Heart left ventricle (tissue), 16 donors: ENCODE measurements at regions of chr2 and their contacts with region 1.

Region 1: DNA sequence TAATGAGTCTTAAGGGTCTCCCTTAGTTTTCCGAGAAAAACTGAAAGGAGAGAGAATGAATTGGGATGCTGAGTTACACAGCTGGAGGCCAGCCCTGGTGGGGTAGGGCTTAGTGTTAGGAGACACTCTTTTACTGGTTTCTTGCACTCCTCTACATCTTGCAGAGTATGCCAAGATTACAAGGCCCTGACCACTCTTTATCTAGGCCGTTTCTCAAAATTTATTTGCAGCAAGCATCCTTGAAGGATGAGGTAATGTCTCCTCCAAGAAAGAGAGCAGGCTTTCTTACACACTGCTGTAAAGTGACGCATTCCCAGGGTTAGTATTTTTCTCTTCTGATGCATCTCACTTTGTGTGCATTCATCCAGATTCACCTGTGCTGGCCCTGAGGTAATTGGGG is 166.2 kb downstream of the TDRD15 start:
- DNase-seq: peak in 2 of 5 donors; percentile 42 to 54
- ATAC-seq: peak in 3 of 4 donors; percentile 75 to 91 (median 81)
- H3K4me3 ChIP-seq: no peak overlapping the region
- H3K27ac ChIP-seq: peak overlapping the region in 7 of 12 donors; percentile 4 to 80 (median 29)
- H3K4me1 ChIP-seq: peaks cover 0 to 25% (median 7%) of the 10 kb centered on the region in 12 donors
- H3K27me3 ChIP-seq: no peaks in the 10 kb centered on the region
- CTCF ChIP-seq: no peak
- POLR2A ChIP-seq: no peak

Region 2: DNA sequence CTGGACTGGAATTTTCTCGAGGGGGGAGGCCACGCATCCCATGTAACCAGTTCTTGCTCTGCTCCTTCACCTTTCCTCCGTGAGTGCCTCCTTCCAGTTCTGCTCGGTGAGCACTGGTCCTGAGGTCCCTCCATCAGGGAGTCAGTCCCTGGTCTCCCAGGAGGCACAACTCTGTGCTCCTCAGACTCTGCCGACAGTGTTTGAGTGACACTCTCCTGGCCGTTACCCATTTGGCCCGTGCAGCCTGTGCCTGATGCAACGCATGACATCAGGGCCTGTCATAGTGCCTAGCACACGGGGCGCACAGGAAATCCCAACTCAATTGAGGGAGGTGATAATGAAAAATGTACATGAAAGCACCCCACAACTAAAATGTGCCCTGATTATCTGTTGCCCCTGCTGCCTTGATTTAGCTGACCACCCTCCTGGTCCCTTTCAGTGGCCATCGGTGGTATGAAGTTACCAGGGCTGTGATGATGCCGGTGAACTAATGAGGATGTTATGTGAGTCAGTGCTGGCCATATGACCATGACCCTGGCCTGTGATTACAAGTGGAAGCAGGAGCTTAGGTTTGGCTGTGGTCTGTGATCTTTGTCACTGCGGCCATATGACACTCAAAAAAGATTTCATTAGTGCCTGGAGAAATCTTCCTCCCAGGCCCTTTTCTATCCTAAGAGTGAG is 21.7 kb before region 1 on chr2:
- intact Hi-C with region 1: loop called in 1 of 10 experiments (anchors 2 kb)
- DNase-seq: peak; percentile 37 to 81 (median 72)
- ATAC-seq: peak; percentile 59 to 82 (median 72)
- H3K4me3 ChIP-seq: no peak overlapping the region
- H3K27ac ChIP-seq: peak overlapping the region in 8 of 12 donors; percentile 23 to 75 (median 56)
- H3K4me1 ChIP-seq: peaks cover 0 to 46% (median 24%) of the 10 kb centered on the region in 12 donors
- H3K27me3 ChIP-seq: no peaks in the 10 kb centered on the region
- CTCF ChIP-seq: no peak
- POLR2A ChIP-seq: no peak